WTC11 (cell line): ENCODE measurements at regions of chr11 and their contacts with region 1.

Region 1: GRCh38 chr11:72430741-72431570 is 3.4 kb downstream of the CLPB start:
- DNase-seq: peak; percentile 31
- ATAC-seq: peak; percentile 24
- H3K4me3 Mint-ChIP-seq: no peak overlapping the region
- H3K27ac Mint-ChIP-seq: peak overlapping the region; percentile 86
- H3K4me1 Mint-ChIP-seq: peaks cover 9% of the 10 kb centered on the region
- H3K27me3 Mint-ChIP-seq: no peaks in the 10 kb centered on the region
- CTCF ChIP-seq: peak; percentile 39; the same call in 1 of the 2 replicates

Region 2: GRCh38 chr11:72179804-72180396 is 251.1 kb before region 1 on chr11:
- CTCF ChIA-PET with region 1: interaction called, 10 read pairs
- POLR2A ChIA-PET with region 1: no interaction called
- DNase-seq: no peak
- ATAC-seq: no peak
- H3K4me3 Mint-ChIP-seq: no peak overlapping the region
- H3K27ac Mint-ChIP-seq: no peak overlapping the region
- H3K4me1 Mint-ChIP-seq: no peaks in the 10 kb centered on the region
- H3K27me3 Mint-ChIP-seq: peaks cover 15% of the 10 kb centered on the region
- CTCF ChIP-seq: no peak

Region 3: DNA sequence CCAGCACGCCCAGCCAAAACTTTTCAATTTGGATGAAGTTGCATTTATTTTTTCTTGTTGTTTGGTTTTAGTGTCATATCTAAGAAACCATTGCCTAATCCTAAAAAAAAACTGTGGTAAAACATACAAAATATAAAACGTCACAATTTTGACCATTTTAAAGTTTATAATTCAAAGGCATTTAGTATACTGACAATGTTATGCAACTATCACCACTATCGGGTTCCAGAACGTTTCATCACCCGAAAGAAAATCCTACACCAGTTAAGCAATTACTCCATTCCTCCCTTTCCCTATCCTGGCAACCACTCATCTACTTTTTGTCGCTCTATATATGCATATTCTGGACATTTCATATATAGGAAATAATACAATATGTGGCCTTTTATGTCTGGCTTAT is 156.5 kb before region 1 on chr11:
- CTCF ChIA-PET with region 1: interaction called, 14 read pairs
- POLR2A ChIA-PET with region 1: no interaction called
- DNase-seq: no peak
- ATAC-seq: no peak
- H3K4me3 Mint-ChIP-seq: no peak overlapping the region
- H3K27ac Mint-ChIP-seq: no peak overlapping the region
- H3K4me1 Mint-ChIP-seq: peaks cover 4% of the 10 kb centered on the region; the same call in 1 of the 2 replicates
- H3K27me3 Mint-ChIP-seq: no peaks in the 10 kb centered on the region
- CTCF ChIP-seq: no peak

Region 4: GRCh38 chr11:72328366-72329224 is 102.4 kb before region 1 on chr11:
- CTCF ChIA-PET with region 1: interaction called, 132 read pairs
- POLR2A ChIA-PET with region 1: interaction called, 5 read pairs
- DNase-seq: no peak
- ATAC-seq: peak; percentile 43; the same call in 1 of the 2 replicates
- H3K4me3 Mint-ChIP-seq: no peak overlapping the region
- H3K27ac Mint-ChIP-seq: no peak overlapping the region
- H3K4me1 Mint-ChIP-seq: peaks cover 5% of the 10 kb centered on the region
- H3K27me3 Mint-ChIP-seq: no peaks in the 10 kb centered on the region
- CTCF ChIP-seq: no peak

Region 5: GRCh38 chr11:72358466-72359405 is 72.2 kb before region 1 on chr11:
- CTCF ChIA-PET with region 1: interaction called, 103 read pairs
- POLR2A ChIA-PET with region 1: no interaction called
- DNase-seq: no peak
- ATAC-seq: no peak; the same call in 1 of the 2 replicates
- H3K4me3 Mint-ChIP-seq: no peak overlapping the region
- H3K27ac Mint-ChIP-seq: peak overlapping the region; percentile 8; the same call in 1 of the 2 replicates
- H3K4me1 Mint-ChIP-seq: peaks cover 7% of the 10 kb centered on the region
- H3K27me3 Mint-ChIP-seq: no peaks in the 10 kb centered on the region
- CTCF ChIP-seq: no peak

Region 6: DNA sequence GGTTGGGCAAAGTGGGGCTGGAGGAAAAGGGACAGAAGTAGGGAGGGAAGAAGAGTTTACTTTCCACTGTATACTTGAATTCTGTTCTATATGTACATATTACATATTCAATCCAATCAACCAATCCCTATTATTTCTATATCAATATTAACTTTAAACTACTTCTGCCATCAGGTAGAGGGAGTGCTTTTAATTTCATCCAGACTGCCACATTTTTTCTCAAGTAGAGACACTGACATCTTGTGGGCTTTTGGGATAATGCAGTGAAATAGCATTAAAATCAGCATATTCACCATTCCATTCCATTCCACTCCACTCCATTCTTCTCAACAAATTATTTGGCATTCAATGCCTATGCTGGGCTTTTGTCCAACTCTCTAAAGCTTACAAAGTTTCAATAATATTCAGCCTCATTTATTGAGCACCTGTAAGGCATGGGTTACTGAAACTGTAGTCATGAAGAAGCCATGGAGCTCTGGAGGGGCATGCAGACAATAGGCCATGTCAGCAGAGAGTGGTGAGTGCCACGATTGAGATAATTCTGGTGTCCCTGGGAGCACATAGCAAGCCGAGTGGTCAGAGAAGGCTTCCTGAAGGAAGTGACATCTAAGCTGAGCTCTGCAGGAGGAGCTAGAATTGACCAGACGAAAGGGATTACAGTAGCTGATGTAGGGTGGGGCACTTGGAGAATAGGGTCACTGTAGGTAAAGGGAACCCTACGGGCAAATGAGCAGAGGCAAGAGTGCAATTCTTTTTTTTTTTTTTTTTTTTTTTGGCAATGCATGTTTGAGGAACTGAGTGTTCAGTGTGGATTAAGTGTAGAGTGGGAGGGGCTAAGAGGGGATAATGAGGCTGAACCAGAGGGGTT is 16.2 kb after region 1 on chr11:
- CTCF ChIA-PET with region 1: interaction called, 84 read pairs
- POLR2A ChIA-PET with region 1: no interaction called
- DNase-seq: no peak
- ATAC-seq: peak; percentile 78
- H3K4me3 Mint-ChIP-seq: no peak overlapping the region
- H3K27ac Mint-ChIP-seq: no peak overlapping the region
- H3K4me1 Mint-ChIP-seq: no peaks in the 10 kb centered on the region
- H3K27me3 Mint-ChIP-seq: peaks cover 7% of the 10 kb centered on the region; the same call in 1 of the 2 replicates
- CTCF ChIP-seq: 0 out of 2 replicates have a peak, but pooled peaks have one; percentile 12

Region 7: DNA sequence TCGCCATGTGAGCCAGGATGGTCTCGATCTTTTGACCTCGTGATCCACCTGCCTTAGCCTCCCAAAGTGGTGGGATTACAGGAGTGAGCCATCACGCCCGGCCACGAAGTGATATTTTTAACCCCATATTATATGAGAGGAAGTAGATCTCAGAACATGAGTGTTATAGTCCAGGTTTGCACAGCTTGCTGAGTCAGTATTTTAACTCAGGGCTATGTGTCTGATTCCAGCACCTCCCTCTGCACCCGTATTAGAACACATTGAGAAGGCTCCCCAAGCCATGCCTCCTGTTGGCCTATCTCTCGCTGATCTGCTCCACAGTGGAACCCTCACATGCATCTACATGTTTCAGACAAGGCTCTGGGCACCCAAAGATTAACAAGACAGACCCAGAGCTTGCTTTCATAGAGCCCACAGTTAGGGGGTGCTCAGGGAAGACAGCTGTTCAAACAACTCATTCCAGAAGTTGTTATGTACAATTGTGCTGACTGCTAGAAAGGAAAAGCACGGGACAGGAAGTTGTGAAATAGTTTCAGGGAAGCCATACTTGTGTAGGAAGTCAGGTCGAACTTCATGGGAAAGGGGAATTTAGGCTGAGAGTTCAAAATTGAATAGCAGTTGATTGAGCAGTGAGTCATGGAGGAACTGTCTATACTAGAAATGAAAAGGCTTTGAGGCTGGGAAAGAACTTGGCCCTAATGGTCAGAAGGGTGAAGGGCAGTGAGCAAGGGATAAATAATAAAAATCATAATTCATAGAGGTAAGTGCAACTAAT is 52.6 kb after region 1 on chr11:
- CTCF ChIA-PET with region 1: no interaction called
- POLR2A ChIA-PET with region 1: no interaction called
- DNase-seq: no peak
- ATAC-seq: no peak
- H3K4me3 Mint-ChIP-seq: no peak overlapping the region
- H3K27ac Mint-ChIP-seq: no peak overlapping the region
- H3K4me1 Mint-ChIP-seq: no peaks in the 10 kb centered on the region
- H3K27me3 Mint-ChIP-seq: no peaks in the 10 kb centered on the region
- CTCF ChIP-seq: no peak

Region 8: GRCh38 chr11:72561856-72562255 is 130.9 kb after region 1 on chr11:
- CTCF ChIA-PET with region 1: no interaction called
- POLR2A ChIA-PET with region 1: no interaction called
- DNase-seq: no peak
- ATAC-seq: no peak
- H3K4me3 Mint-ChIP-seq: no peak overlapping the region
- H3K27ac Mint-ChIP-seq: no peak overlapping the region
- H3K4me1 Mint-ChIP-seq: peaks cover 5% of the 10 kb centered on the region
- H3K27me3 Mint-ChIP-seq: no peaks in the 10 kb centered on the region
- CTCF ChIP-seq: no peak

Region 9: DNA sequence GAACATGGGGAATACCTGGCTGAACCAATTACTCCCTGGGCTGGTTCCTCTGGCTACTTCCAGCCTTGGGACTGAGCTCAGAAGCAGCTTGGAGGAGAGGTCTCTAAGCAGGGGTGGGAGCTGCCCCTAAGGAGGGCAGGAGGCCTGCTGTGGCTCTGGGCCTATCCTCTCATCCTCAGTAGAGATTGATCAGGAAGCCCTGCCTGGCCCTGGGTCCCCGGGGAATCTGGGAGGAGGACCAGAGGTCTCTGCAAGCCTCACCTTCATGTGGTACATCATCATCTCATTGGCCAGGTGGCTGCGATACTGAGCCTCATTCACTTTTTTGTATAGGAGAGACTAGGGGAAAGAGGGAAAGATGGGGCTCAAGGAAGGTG is 152.2 kb after region 1 on chr11:
- CTCF ChIA-PET with region 1: no interaction called
- POLR2A ChIA-PET with region 1: no interaction called
- DNase-seq: no peak
- ATAC-seq: no peak
- H3K4me3 Mint-ChIP-seq: no peak overlapping the region
- H3K27ac Mint-ChIP-seq: no peak overlapping the region
- H3K4me1 Mint-ChIP-seq: peaks cover 18% of the 10 kb centered on the region
- H3K27me3 Mint-ChIP-seq: peaks cover 67% of the 10 kb centered on the region
- CTCF ChIP-seq: no peak